ENCODE measurements at regions of chr10 and their contacts with region 1.

Region 1: DNA sequence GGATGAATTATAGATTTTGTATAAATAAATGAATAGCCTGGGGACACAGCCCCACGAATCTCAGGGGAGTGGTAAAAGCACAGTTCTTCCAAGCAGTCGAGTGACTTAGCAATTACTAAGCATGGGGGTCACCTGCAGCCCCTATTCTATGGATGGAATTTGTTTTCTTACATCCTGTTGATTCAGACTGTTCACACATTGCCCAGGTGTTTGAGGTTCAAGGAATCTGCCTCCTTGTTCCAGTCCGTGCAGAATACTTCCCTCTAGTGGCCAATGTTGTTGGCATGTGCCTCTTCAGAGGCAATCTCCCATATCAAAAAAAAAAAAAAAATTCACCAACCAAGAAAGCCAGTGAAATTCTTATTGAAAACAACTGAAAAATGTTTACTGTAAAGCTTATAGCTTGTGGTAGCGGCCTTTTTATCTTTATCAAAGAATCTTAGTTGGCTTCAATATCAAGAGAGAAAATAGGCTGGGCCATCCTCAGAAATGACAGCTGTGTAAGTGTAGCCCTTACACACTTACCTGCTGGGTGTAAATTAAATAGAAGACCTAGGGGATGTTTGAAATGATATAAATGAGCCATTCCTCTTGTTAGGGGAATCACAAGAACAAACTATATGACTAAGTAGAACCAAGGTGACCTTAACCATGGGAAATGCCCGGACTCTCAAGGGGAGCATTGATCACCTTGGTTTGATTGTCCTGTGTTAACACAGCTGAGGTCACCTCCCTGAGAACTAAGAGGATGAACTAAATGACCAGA is 7.8 kb downstream of the LIPM start:
- H3K4me3 Mint-ChIP-seq: no peak overlapping the region
- H3K27ac Mint-ChIP-seq: no peak overlapping the region
- H3K4me1 Mint-ChIP-seq: peaks cover 5% of the 10 kb centered on the region
- H3K27me3 Mint-ChIP-seq: peaks cover 8% of the 10 kb centered on the region

Region 2: GRCh38 chr10:88565072-88565471 is 245.3 kb before region 1 on chr10:
- intact Hi-C with region 1: loop called (anchors 2 kb)
- H3K4me3 Mint-ChIP-seq: no peak overlapping the region
- H3K27ac Mint-ChIP-seq: no peak overlapping the region
- H3K4me1 Mint-ChIP-seq: no peaks in the 10 kb centered on the region
- H3K27me3 Mint-ChIP-seq: no peaks in the 10 kb centered on the region

Region 3: DNA sequence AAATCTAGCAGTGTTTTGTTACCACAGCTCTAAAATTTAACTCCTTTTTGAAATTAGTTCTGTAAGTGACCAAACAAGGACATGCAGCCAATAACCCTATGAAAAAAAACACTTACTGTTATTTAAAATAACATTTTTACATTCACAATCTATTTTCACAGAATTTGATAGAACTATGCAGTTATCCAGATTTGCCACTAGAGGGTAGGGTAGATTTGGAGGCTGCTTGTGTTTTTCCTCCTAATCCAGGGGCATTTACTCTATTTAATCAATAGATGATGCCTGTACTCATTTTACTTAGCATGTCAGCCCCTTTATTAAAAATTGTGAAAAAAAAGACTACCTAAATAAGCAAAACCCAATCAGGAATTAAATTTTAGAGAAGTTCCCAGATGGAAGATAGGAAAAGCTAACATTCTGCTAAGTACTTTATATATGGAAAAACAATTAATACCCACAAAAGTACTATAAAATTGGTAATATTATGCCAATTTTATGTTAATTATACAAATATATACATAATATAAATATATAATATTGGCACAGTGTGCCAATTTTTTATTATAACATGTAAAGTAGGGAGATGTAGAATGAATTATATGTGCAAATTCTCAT is 122.4 kb before region 1 on chr10:
- intact Hi-C with region 1: loop called (anchors 1 kb)
- H3K4me3 Mint-ChIP-seq: no peak overlapping the region
- H3K27ac Mint-ChIP-seq: no peak overlapping the region
- H3K4me1 Mint-ChIP-seq: no peaks in the 10 kb centered on the region
- H3K27me3 Mint-ChIP-seq: peaks cover 5% of the 10 kb centered on the region

Region 4: DNA sequence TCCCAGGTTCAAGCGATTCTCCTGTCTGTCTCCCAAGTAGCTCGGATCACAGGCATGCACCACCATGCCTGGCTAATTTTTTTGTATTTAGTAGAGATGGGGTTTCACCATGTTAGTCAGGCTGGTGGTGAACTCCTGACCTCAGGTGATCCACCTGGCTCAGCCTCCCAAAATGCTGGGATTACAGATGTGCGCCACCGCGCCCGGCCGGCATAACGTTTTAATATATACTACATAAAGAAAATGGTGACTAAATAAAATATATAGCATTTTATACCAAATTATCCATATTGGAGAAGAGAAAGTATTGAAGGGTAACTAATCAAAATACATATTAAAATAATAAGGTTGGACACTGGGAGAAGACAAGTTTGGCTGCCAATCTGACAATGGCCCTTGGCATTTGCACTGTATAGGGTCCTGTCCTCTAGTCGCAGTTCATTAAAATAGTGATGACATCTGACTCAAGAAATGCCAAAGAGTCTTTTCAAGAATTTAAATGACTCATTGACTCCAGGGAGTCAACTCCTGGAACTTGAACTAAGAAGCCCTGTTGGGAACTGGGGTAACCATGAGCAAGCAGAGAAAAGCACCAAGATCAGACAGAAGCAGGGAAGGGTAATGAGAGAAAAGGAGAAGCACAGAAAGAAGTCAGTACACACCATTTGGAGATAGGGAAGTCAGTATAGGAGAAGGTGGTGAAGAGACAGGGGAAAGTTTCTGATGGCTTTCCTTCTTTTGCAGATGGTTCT is 305.7 kb after region 1 on chr10:
- intact Hi-C with region 1: no loop called
- H3K4me3 Mint-ChIP-seq: no peak overlapping the region
- H3K27ac Mint-ChIP-seq: peak overlapping the region; percentile 49
- H3K4me1 Mint-ChIP-seq: peaks cover 37% of the 10 kb centered on the region
- H3K27me3 Mint-ChIP-seq: no peaks in the 10 kb centered on the region

Region 5: GRCh38 chr10:89391917-89392756 is 581.8 kb after region 1 on chr10 and contains the start of gene IFIT1:
- intact Hi-C with region 1: no loop called
- H3K4me3 Mint-ChIP-seq: peak within 1 kb of the TSS; percentile 67
- H3K27ac Mint-ChIP-seq: peak within 1 kb of the TSS; percentile 51
- H3K4me1 Mint-ChIP-seq: peaks cover 11% of the 10 kb centered on the region
- H3K27me3 Mint-ChIP-seq: no peaks in the 10 kb centered on the region